HepG2 (cell line): ENCODE measurements at regions of chr3 and their contacts with region 1.

Region 1: DNA sequence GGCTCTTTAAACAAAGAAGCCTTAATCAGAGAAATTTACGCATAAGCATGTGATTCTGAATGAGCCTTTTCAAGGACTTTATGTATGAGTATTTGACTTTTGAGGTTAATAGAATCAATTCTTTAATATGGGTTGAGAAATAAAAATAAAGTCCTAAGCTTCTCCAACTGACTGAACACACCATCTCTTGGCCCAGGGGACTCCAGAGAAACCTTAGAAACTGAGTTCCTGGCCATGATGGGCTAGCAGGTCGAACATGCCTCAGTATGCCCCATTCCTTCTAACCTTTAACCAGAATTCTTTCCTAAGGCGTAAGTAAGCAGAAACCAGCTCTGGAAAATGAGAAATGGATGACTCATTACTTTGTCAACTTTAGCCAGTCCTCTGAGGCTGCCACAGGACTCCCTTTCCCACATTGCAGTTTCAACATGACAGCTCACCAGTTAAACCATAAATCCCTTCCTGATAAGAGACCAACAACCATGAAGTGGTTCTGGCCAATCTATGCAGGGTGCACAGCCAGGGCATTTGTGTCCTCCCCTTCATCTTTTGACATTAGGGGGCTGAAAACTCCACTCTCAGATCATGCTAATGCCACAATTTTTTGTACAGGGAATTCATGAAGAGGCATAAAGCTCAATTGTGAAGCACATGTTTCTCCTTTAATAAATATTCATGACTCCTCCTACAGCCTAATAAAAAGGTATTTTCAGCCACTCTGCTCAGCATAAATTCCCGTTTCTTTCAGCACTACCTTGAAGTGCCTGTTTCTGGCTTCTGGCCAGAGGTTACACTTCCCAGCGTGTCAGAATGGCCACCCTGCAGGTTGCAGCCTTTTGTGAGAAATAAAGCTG is 33.3 kb downstream of the TM4SF18 start:
- DNase-seq: peak; percentile 94
- ATAC-seq: peak; percentile 98
- H3K4me3 ChIP-seq: peak overlapping the region in 1 of 3 experiments; percentile 34; a peak in 1 of 6 replicates
- H3K27ac ChIP-seq: peak overlapping the region; percentile 66
- H3K4me1 ChIP-seq: peaks cover 35% of the 10 kb centered on the region
- H3K27me3 ChIP-seq: no peaks in the 10 kb centered on the region
- CTCF ChIP-seq: no peak
- EP300 ChIP-seq: peak in 1 of 2 experiments; percentile 68; a peak in 2 of 4 replicates
- POLR2A ChIP-seq: peak in 1 of 2 experiments; percentile 54; a peak in 2 of 4 replicates
- RAD21 ChIP-seq: no peak

Region 2: DNA sequence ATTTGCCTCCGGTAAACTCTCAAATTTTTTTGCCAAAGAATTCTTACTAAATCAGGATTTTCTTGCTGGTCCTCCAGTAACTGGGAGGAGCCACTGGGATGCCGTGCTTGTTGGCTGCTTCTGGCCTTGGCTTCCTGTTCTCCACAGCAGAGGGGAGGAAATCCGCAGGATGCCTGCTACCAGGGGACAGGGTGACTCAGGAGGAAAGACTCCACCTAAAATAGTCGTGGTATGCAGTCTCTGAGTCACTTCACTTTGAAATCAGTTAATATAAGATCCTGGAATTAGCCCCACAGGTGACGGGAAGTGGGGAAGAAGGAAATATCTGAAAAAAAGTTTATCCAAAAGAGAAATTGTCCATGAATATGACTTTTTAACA is 39.8 kb after region 1 on chr3:
- CTCF ChIA-PET with region 1: no interaction called
- POLR2A ChIA-PET with region 1: no interaction called
- in situ Hi-C with region 1: no loop called
- intact Hi-C with region 1: loop called (anchors 10 kb)
- DNase-seq: peak; percentile 77
- ATAC-seq: peak; percentile 93
- H3K4me3 ChIP-seq: peak overlapping the region in 1 of 3 experiments; percentile 23; a peak in 1 of 6 replicates
- H3K27ac ChIP-seq: peak overlapping the region; percentile 39
- H3K4me1 ChIP-seq: peaks cover 45% of the 10 kb centered on the region
- H3K27me3 ChIP-seq: no peaks in the 10 kb centered on the region
- CTCF ChIP-seq: no peak
- EP300 ChIP-seq: peak in 1 of 2 experiments; percentile 65; a peak in 2 of 4 replicates
- POLR2A ChIP-seq: no peak
- RAD21 ChIP-seq: no peak

Region 3: GRCh38 chr3:149572796-149573414 is 272.7 kb after region 1 on chr3:
- CTCF ChIA-PET with region 1: no interaction called
- POLR2A ChIA-PET with region 1: no interaction called
- in situ Hi-C with region 1: no loop called
- intact Hi-C with region 1: no loop called
- DNase-seq: no peak
- ATAC-seq: no peak
- H3K4me3 ChIP-seq: no peak overlapping the region
- H3K27ac ChIP-seq: no peak overlapping the region
- H3K4me1 ChIP-seq: peaks cover 28% of the 10 kb centered on the region
- H3K27me3 ChIP-seq: no peaks in the 10 kb centered on the region
- CTCF ChIP-seq: no peak
- EP300 ChIP-seq: no peak
- POLR2A ChIP-seq: no peak
- RAD21 ChIP-seq: no peak

Region 4: GRCh38 chr3:149603126-149604074 is 303.2 kb after region 1 on chr3:
- CTCF ChIA-PET with region 1: no interaction called
- POLR2A ChIA-PET with region 1: no interaction called
- in situ Hi-C with region 1: no loop called
- intact Hi-C with region 1: no loop called
- DNase-seq: no peak
- ATAC-seq: no peak
- H3K4me3 ChIP-seq: no peak overlapping the region
- H3K27ac ChIP-seq: no peak overlapping the region
- H3K4me1 ChIP-seq: peaks cover 97% of the 10 kb centered on the region
- H3K27me3 ChIP-seq: no peaks in the 10 kb centered on the region
- CTCF ChIP-seq: no peak
- EP300 ChIP-seq: no peak
- POLR2A ChIP-seq: no peak
- RAD21 ChIP-seq: no peak